Caco-2 (cell line): ENCODE measurements at regions of chr2 and their contacts with region 1.

Region 1: DNA sequence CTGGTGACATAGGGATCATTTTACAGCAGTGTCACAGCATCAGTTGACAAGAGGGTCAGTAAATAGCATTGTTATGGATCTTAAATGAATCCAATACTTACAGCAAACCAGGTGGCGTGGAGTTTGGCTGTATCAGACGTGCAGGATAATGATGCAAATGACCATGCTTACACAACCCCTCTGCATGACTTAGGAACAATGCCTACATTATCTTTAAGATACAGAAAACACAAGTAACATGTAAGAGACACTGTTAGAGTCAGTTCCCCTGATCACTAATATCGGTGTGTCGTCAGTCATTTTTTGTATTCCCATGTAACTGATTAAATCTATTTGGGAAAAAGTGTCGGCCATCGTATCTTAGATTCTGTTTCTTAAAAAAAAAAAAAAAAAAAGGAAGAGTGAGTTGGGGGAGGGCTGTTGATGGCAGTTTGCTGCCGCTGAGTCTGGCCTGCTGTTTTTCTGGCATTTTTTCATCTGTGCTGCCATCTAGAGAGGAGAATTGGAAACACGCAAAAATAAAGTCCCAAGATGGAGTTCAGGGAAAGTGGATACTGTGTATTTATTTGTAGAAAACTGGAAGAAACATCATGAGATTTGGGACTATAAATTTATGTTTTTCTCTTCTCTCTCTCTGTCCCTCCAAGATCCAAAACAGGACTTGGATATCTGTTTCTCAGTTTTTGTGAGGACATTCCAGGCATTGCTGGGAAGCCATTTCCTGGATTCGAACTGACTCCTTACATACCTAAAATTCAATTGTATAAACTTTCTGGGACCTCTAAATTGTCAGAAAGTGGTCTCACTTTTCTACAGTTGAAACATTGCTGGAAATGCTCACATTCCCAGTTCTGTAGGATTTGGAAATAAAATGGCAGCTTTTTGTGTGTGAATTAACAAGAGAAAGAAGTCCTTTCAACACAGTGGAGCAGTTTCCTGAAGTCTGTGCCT is 60.3 kb upstream of the AGPS start:
- DNase-seq: peak; percentile 63 to 74
- H3K4me3 ChIP-seq: no peak overlapping the region
- H3K4me3 Mint-ChIP-seq: no peak overlapping the region
- H3K27ac Mint-ChIP-seq: peak overlapping the region; percentile 26
- H3K4me1 ChIP-seq: peaks cover 35% of the 10 kb centered on the region
- H3K4me1 Mint-ChIP-seq: peaks cover 19% of the 10 kb centered on the region
- H3K27me3 ChIP-seq: no peaks in the 10 kb centered on the region
- H3K27me3 Mint-ChIP-seq: no peaks in the 10 kb centered on the region
- CTCF ChIP-seq: peak; percentile 66 to 69

Region 2: GRCh38 chr2:177263451-177264208 is 68.7 kb before region 1 on chr2:
- CTCF ChIA-PET with region 1: interaction called, 5 read pairs
- POLR2A ChIA-PET with region 1: interaction called, 10 read pairs
- intact Hi-C with region 1: loop called (anchors 1 kb)
- DNase-seq: peak; percentile 98 to 99
- H3K4me3 ChIP-seq: peak overlapping the region; percentile 91
- H3K4me3 Mint-ChIP-seq: peak overlapping the region; percentile 97
- H3K27ac Mint-ChIP-seq: peak overlapping the region; percentile 91
- H3K4me1 ChIP-seq: peaks cover 40% of the 10 kb centered on the region
- H3K4me1 Mint-ChIP-seq: peaks cover 21% of the 10 kb centered on the region
- H3K27me3 ChIP-seq: no peaks in the 10 kb centered on the region
- H3K27me3 Mint-ChIP-seq: no peaks in the 10 kb centered on the region
- CTCF ChIP-seq: peak; percentile 83 to 95

Region 3: GRCh38 chr2:177419274-177419673 is 87.0 kb after region 1 on chr2:
- CTCF ChIA-PET with region 1: interaction called, 17 read pairs
- POLR2A ChIA-PET with region 1: no interaction called
- intact Hi-C with region 1: loop called (anchors 1 kb)
- DNase-seq: no peak
- H3K4me3 ChIP-seq: no peak overlapping the region
- H3K4me3 Mint-ChIP-seq: no peak overlapping the region
- H3K27ac Mint-ChIP-seq: peak overlapping the region; percentile 53
- H3K4me1 ChIP-seq: peaks cover 34% of the 10 kb centered on the region
- H3K4me1 Mint-ChIP-seq: peaks cover 29% of the 10 kb centered on the region
- H3K27me3 ChIP-seq: no peaks in the 10 kb centered on the region
- H3K27me3 Mint-ChIP-seq: no peaks in the 10 kb centered on the region
- CTCF ChIP-seq: no peak

Region 4: DNA sequence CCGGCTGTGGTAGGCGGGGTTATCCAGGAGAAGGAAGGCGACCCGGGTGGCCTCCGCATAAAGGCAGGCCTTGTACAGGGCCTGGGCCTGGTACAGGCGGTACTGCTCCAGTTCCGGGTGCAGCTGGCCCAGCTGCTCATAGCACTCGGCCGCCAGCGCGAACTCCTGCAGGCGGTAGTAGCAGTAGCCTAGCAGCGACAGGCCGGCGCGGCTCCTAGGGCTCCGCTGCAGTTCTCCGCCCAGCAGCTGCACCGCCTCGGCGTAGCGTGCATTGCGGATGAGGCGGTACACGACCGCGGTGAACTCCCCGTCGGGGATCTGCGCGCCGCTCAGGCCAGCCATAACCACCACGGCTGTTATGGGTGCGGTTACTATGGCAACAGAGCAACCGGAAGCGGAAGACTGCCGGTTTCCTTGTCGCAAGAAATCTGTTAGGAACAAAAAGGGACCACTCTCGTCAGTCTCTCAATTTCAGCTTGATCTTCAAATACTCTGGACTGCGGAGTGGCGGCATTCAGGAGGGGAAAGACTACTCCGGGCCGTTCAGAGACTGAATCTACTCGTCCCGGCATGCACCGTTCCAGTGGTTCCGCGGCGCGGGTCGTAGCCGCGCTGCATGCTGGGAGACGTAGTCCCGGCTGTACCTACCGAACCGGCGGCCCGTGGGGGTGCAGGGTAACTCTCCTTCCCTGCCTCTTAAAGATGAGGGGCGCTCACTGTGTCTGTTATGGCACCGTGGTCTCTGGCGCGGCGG is 220.3 kb after region 1 on chr2:
- CTCF ChIA-PET with region 1: no interaction called
- POLR2A ChIA-PET with region 1: no interaction called
- intact Hi-C with region 1: loop called (anchors 5 kb)
- DNase-seq: peak; percentile 91 to 92
- H3K4me3 ChIP-seq: peak overlapping the region; percentile 76
- H3K4me3 Mint-ChIP-seq: peak overlapping the region; percentile 99
- H3K27ac Mint-ChIP-seq: peak overlapping the region; percentile 100
- H3K4me1 ChIP-seq: no peaks in the 10 kb centered on the region
- H3K4me1 Mint-ChIP-seq: no peaks in the 10 kb centered on the region
- H3K27me3 ChIP-seq: no peaks in the 10 kb centered on the region
- H3K27me3 Mint-ChIP-seq: no peaks in the 10 kb centered on the region
- CTCF ChIP-seq: no peak

Region 5: GRCh38 chr2:177724398-177725287 is 392.3 kb after region 1 on chr2:
- CTCF ChIA-PET with region 1: no interaction called
- POLR2A ChIA-PET with region 1: no interaction called
- intact Hi-C with region 1: loop called (anchors 1 kb)
- DNase-seq: peak; percentile 45 to 63
- H3K4me3 ChIP-seq: no peak overlapping the region
- H3K4me3 Mint-ChIP-seq: no peak overlapping the region
- H3K27ac Mint-ChIP-seq: no peak overlapping the region
- H3K4me1 ChIP-seq: no peaks in the 10 kb centered on the region
- H3K4me1 Mint-ChIP-seq: no peaks in the 10 kb centered on the region
- H3K27me3 ChIP-seq: no peaks in the 10 kb centered on the region
- H3K27me3 Mint-ChIP-seq: peaks cover 2% of the 10 kb centered on the region
- CTCF ChIP-seq: peak; percentile 92 to 96